Aorta (tissue), 5 donors: ENCODE measurements at regions of chr4 and their contacts with region 1.

Region 1: GRCh38 chr4:104763554-104764222 is 269.0 kb upstream of the CXXC4 start:
- DNase-seq: no peak
- ATAC-seq: no peak
- H3K4me3 ChIP-seq: no peak overlapping the region
- H3K27ac ChIP-seq: no peak overlapping the region
- H3K4me1 ChIP-seq: no peaks in the 10 kb centered on the region
- H3K27me3 ChIP-seq: no peaks in the 10 kb centered on the region

Region 2: DNA sequence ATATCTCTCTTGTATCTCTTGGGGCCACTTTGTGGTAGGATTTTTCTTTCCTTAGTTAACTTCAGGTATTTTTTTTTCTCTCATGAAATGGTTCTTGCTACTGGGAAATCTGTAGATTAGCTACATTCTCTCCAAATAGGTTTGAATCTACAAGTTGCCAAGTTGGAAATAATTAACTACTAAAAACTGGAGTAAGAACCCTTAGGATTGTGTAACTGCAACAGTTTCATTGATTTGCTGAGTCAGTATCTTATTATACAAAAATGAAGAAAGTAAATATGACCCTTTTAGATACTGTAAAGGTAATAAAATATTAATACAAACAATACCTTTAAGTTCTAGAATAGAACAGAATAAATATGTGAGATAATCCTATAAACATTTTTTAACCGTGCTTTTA is 596.9 kb before region 1 on chr4:
- intact Hi-C with region 1: loop called in 1 of 2 experiments (anchors 10 kb)
- DNase-seq: no peak
- ATAC-seq: no peak
- H3K4me3 ChIP-seq: no peak overlapping the region
- H3K27ac ChIP-seq: no peak overlapping the region
- H3K4me1 ChIP-seq: no peaks in the 10 kb centered on the region
- H3K27me3 ChIP-seq: no peaks in the 10 kb centered on the region

Region 3: GRCh38 chr4:105061136-105061696 is 297.5 kb after region 1 on chr4:
- intact Hi-C with region 1: no loop called
- DNase-seq: no peak
- ATAC-seq: no peak
- H3K4me3 ChIP-seq: no peak overlapping the region
- H3K27ac ChIP-seq: no peak overlapping the region
- H3K4me1 ChIP-seq: no peaks in the 10 kb centered on the region
- H3K27me3 ChIP-seq: no peaks in the 10 kb centered on the region